K562 (cell line): ENCODE measurements at regions of chr13 and their contacts with region 1.

Region 1: GRCh38 chr13:26221721-26222519 is at the start of gene RNF6:
- DNase-seq: peak; percentile 93 to 97 (median 95)
- ATAC-seq: peak; percentile 98
- H3K4me3 ChIP-seq: peak within 1 kb of the TSS; percentile 73
- H3K27ac ChIP-seq: peak within 1 kb of the TSS; percentile 91
- H3K4me1 ChIP-seq: peaks cover 4 to 20% of the 10 kb centered on the region in 2 experiments; a peak in 3 of 5 replicates
- H3K27me3 ChIP-seq: no peaks in the 10 kb centered on the region
- CTCF ChIP-seq: no peak
- EP300 ChIP-seq: peak; percentile 30; the same call in 1 of the 2 replicates
- POLR2A ChIP-seq: peak; percentile 92
- RAD21 ChIP-seq: peak in 1 of 2 experiments; percentile 27; a peak in 1 of 4 replicates
- polyA plus RNA-seq, gene RNF6: 12.0 to 12.9 TPM

Region 2: DNA sequence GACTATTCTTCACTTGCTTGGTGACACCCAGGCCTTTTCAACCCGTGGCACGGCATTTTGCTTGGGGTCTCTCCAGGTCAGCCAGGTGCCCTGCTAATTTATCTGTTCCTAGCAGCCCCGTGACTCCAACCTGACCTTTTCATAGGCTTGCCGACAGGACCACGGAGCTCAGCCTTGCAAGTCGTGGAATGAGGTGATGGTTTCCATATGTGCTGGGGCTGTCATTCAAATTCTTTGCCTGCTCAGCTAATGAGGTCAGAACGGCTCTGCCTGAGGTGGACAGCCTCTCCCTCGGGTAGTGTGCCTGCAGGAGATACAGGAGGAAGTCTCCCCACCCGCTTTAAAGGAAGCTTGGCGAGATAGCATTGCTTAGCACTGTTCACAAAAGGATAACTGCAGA is 231.1 kb before region 1 on chr13:
- CTCF ChIA-PET with region 1: no interaction called
- POLR2A ChIA-PET with region 1: no interaction called
- in situ Hi-C with region 1: no loop called
- intact Hi-C with region 1: no loop called
- DNase-seq: no peak
- ATAC-seq: no peak
- H3K4me3 ChIP-seq: no peak overlapping the region
- H3K27ac ChIP-seq: no peak overlapping the region
- H3K4me1 ChIP-seq: no peaks in the 10 kb centered on the region
- H3K27me3 ChIP-seq: no peaks in the 10 kb centered on the region; a peak in 1 of 5 replicates
- CTCF ChIP-seq: no peak
- EP300 ChIP-seq: no peak
- POLR2A ChIP-seq: no peak
- RAD21 ChIP-seq: no peak

Region 3: GRCh38 chr13:26051657-26052311 is 170.1 kb before region 1 on chr13 and contains the start of gene SHISA2:
- CTCF ChIA-PET with region 1: no interaction called
- POLR2A ChIA-PET with region 1: no interaction called
- in situ Hi-C with region 1: no loop called
- intact Hi-C with region 1: no loop called
- DNase-seq: no peak
- ATAC-seq: no peak
- H3K4me3 ChIP-seq: no peak within 1 kb of the TSS
- H3K27ac ChIP-seq: no peak within 1 kb of the TSS
- H3K4me1 ChIP-seq: no peaks in the 10 kb centered on the region; a peak in 1 of 5 replicates
- H3K27me3 ChIP-seq: peaks cover 0 to 17% of the 10 kb centered on the region in 2 experiments; a peak in 2 of 5 replicates
- CTCF ChIP-seq: no peak
- EP300 ChIP-seq: no peak
- POLR2A ChIP-seq: no peak
- RAD21 ChIP-seq: no peak
- polyA plus RNA-seq, gene SHISA2: not detected

Region 4: DNA sequence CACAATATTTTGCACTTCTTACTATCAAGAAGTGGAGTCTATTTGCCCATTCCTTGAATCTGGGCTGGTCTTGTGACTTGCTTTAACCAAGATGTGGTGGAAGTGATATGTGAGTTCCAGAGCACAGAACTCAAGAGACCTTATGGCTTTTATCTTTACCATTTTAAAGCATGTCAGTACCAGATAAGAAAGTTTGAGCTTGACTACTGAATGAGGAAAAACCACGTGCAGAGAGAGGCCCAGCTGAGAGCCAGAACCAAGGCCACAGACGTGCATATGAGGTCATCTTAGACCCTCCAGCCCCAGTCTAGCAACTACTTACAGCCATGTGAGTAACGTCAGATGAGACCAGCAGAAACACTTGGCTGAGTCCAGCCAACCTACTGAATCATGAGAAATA is 25.7 kb after region 1 on chr13:
- CTCF ChIA-PET with region 1: no interaction called
- POLR2A ChIA-PET with region 1: interaction called, 3 read pairs
- in situ Hi-C with region 1: no loop called
- intact Hi-C with region 1: loop called (anchors 2 kb)
- DNase-seq: peak; percentile 34 to 84 (median 53)
- ATAC-seq: peak; percentile 96
- H3K4me3 ChIP-seq: no peak overlapping the region
- H3K27ac ChIP-seq: peak overlapping the region; percentile 34; the same call in 1 of the 3 replicates
- H3K4me1 ChIP-seq: peaks cover 4 to 29% of the 10 kb centered on the region in 2 experiments
- H3K27me3 ChIP-seq: no peaks in the 10 kb centered on the region
- CTCF ChIP-seq: no peak
- EP300 ChIP-seq: peak; percentile 81
- POLR2A ChIP-seq: no peak
- RAD21 ChIP-seq: no peak; a peak in 1 of 4 replicates

Region 5: GRCh38 chr13:26253787-26254582 is 32.1 kb after region 1 on chr13 and contains the start of gene CDK8:
- CTCF ChIA-PET with region 1: no interaction called
- POLR2A ChIA-PET with region 1: interaction called, 3 read pairs
- in situ Hi-C with region 1: no loop called
- intact Hi-C with region 1: loop called (anchors 2 kb)
- DNase-seq: peak; percentile 74 to 90 (median 78)
- ATAC-seq: peak; percentile 90
- H3K4me3 ChIP-seq: peak within 1 kb of the TSS; percentile 79
- H3K27ac ChIP-seq: peak within 1 kb of the TSS; percentile 92
- H3K4me1 ChIP-seq: peaks cover 0 to 2% of the 10 kb centered on the region in 2 experiments; a peak in 2 of 5 replicates
- H3K27me3 ChIP-seq: no peaks in the 10 kb centered on the region
- CTCF ChIP-seq: no peak
- EP300 ChIP-seq: no peak
- POLR2A ChIP-seq: peak; percentile 81
- RAD21 ChIP-seq: no peak
- polyA plus RNA-seq, gene CDK8: 11.3 to 14.7 TPM

Region 6: DNA sequence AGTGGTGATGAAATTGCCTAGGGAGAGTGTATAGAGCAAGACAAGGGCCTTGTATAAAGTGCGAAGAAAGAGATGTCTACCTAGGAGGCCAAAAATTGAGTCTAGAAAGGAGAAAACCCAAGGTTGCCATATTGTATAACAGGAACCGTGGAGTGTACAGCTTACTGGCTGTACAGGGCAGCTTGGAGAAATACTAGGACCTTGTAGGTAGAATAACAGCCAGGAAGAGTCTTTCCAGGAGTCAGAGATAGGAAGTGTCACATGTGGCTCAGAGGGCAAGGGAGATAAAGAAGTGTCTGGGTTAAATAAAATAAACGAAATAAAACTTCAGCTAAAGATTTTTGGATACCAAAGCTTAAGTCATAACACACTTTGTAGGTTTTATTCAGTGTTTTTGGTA is 44.4 kb after region 1 on chr13:
- CTCF ChIA-PET with region 1: no interaction called
- POLR2A ChIA-PET with region 1: no interaction called
- in situ Hi-C with region 1: no loop called
- intact Hi-C with region 1: no loop called
- DNase-seq: no peak
- ATAC-seq: peak; percentile 40; the same call in 1 of the 3 replicates
- H3K4me3 ChIP-seq: no peak overlapping the region
- H3K27ac ChIP-seq: no peak overlapping the region
- H3K4me1 ChIP-seq: no peaks in the 10 kb centered on the region; a peak in 2 of 5 replicates
- H3K27me3 ChIP-seq: no peaks in the 10 kb centered on the region
- CTCF ChIP-seq: no peak
- EP300 ChIP-seq: no peak
- POLR2A ChIP-seq: no peak
- RAD21 ChIP-seq: no peak